ENCODE measurements at regions of chr7 and their contacts with region 1.

Region 1: DNA sequence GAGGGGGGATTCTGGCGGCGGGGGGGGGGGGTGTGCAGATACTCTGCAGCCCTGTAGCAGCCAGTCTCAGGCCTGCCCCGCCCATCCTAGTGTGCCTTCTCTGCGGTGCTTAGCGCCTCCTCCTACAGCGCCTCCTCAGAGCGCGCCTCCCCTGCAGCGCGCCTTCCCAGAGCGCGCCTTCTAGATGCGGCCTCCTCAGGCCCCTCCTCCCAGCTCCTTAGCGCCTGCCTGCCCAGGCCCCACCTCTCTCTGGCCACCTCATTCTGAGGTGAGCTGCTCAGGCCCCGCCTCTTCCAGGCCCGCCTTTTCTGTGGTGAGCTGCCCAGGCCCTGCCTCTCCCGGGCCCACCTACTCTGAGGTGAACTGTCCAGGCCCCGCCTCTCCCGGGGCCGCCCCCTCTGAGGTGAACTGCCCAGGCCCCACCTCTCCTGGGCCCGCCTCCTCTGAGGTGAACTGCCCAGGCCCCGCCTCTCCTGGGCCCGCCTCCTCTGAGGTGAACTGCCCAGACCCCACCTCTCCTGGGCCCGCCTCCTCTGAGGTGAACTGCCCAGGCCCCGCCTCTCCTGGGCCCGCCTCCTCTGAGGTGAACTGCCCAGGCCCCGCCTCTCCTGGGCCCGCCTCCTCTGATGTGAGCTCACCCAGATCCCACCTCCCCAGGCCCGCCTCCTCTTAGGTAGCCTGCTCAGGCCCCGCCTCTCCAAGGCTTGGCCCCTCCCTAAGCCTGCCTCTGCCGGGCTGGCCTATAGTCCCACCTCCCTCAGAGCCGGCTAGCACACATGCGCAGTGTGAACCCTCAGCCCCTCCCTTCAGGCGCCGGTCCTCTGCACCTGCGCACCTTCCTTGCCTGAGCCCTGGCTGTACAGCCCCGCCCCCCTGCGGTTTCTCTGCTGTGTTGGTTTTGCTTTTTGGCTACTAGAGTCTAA is 2.1 kb upstream of the SGCE start:
- DNase-seq: peak; percentile 94
- H3K4me3 Mint-ChIP-seq: peak overlapping the region; percentile 74
- H3K27ac Mint-ChIP-seq: no peak overlapping the region
- H3K4me1 Mint-ChIP-seq: no peaks in the 10 kb centered on the region
- H3K27me3 Mint-ChIP-seq: no peaks in the 10 kb centered on the region
- CTCF ChIP-seq: no peak

Region 2: DNA sequence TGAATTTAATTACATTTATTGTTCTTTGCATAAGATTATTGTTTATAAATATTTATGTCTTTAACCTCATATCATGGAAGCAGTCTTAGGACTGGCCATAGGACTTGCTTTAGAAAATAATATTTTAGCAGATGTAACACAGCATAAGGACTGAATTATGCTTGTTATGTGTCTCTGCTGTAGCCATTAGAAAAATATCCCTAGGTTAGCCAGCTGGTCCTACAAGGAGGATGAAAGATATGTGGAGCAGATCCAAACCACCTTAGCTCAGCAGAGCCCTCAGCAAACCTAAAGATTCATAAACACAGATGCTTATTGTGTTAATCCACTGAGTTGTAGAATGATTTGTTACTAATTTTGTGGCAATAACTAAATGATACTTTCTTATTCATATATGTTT is 429.4 kb before region 1 on chr7:
- CTCF ChIA-PET with region 1: no interaction called
- POLR2A ChIA-PET with region 1: no interaction called
- intact Hi-C with region 1: no loop called
- DNase-seq: no peak
- H3K4me3 Mint-ChIP-seq: no peak overlapping the region
- H3K27ac Mint-ChIP-seq: no peak overlapping the region
- H3K4me1 Mint-ChIP-seq: peaks cover 4% of the 10 kb centered on the region
- H3K27me3 Mint-ChIP-seq: no peaks in the 10 kb centered on the region
- CTCF ChIP-seq: no peak

Region 3: DNA sequence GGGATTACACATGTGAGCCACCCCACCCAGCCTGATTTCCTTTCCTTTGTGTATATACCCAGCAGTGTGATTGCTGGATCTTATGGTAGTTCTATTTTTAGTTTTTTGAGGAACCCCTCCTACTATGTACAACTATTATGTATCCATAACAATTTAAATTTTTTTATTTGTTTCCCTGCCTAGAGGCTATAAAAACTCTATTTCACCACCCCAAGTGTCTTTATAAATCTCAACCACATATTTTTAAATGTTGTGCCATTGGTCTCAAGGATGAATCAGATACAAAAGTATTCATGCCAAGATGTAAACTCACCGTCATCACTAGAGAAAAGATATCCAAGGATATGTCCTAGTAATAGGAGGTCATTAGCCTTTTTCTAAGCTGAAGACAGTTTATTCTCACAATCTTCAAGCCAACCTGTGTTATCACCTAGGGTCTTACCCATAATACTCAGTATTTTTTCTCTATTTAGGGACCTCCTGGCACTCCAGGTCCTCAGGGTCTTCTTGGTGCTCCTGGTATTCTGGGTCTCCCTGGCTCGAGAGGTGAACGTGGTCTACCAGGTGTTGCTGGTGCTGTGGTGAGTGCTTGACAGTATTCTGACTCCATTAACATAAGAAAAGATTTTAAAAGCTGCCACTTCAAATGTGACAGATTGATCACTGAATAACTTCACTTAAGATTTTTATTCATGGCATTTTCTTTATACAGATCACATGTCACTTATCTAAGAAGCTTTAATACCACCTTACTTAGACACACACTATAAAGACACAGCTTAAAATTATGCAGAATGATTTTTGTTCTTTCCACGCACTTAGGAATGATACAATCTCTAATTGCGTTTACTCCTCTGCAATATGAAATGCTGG is 233.9 kb before region 1 on chr7:
- CTCF ChIA-PET with region 1: no interaction called
- POLR2A ChIA-PET with region 1: no interaction called
- intact Hi-C with region 1: no loop called
- DNase-seq: peak; percentile 52
- H3K4me3 Mint-ChIP-seq: no peak overlapping the region
- H3K27ac Mint-ChIP-seq: peak overlapping the region; percentile 99
- H3K4me1 Mint-ChIP-seq: peaks cover 8% of the 10 kb centered on the region
- H3K27me3 Mint-ChIP-seq: no peaks in the 10 kb centered on the region
- CTCF ChIP-seq: no peak

Region 4: DNA sequence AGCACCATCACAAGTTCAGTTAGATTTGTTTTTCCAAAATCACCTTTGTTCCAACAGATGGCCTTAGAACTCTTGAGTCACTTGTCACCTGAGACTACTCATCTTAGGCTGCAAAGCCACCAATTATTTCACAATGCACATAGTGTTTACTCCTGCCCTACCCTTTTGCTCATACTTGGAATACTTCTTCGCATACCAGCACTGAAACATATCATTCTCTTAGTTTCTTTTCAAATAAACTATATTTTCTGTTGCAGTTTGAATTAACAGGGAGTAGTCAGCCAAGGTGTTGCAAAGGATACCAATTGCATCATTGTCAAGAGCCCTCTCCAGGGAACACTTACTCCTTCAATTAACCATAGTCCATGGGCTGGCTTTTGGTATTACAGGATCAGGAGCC is 77.4 kb before region 1 on chr7:
- CTCF ChIA-PET with region 1: interaction called, 7 read pairs
- POLR2A ChIA-PET with region 1: interaction called, 12 read pairs
- intact Hi-C with region 1: loop called (anchors 5 kb)
- DNase-seq: peak; percentile 27
- H3K4me3 Mint-ChIP-seq: no peak overlapping the region
- H3K27ac Mint-ChIP-seq: peak overlapping the region; percentile 21
- H3K4me1 Mint-ChIP-seq: peaks cover 46% of the 10 kb centered on the region
- H3K27me3 Mint-ChIP-seq: no peaks in the 10 kb centered on the region
- CTCF ChIP-seq: no peak

Region 5: DNA sequence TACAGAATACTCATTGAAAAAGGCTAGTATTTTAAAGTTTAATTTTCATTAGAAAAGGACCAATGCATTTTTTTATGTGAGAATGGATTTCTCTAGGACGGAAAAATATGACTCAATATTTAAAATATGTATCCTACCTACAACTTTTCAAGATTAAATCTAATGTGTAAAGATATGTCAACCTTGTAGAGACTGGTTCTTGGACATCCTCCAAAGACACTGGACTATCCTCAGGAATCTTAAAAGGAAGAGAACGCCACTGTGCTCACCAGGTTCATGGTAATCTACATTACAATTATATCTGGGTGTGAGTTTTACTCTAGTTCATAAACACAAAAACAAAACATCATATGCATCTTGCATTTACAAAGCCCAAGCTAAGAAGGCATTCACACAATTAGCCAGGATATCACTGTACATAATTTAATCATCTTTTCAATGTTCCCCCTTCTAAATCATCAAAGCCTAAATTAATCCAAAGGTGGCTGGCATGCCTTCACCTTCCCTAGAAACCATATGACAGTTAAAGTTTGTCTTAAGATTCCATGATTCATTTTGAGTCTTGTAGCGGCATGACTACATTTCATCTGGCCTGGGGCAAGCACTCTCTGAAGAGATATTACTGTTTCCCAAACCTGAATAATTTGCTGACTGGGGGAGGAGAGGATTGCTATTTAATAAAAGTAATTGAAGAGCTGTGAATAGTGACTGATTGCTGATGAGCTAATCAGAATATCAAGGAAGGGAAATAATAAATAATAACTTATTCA is 14.1 kb before region 1 on chr7:
- CTCF ChIA-PET with region 1: interaction called, 10 read pairs
- POLR2A ChIA-PET with region 1: interaction called, 35 read pairs
- intact Hi-C with region 1: no loop called
- DNase-seq: peak; percentile 68
- H3K4me3 Mint-ChIP-seq: no peak overlapping the region
- H3K27ac Mint-ChIP-seq: peak overlapping the region; percentile 11
- H3K4me1 Mint-ChIP-seq: peaks cover 25% of the 10 kb centered on the region
- H3K27me3 Mint-ChIP-seq: no peaks in the 10 kb centered on the region
- CTCF ChIP-seq: no peak

Region 6: DNA sequence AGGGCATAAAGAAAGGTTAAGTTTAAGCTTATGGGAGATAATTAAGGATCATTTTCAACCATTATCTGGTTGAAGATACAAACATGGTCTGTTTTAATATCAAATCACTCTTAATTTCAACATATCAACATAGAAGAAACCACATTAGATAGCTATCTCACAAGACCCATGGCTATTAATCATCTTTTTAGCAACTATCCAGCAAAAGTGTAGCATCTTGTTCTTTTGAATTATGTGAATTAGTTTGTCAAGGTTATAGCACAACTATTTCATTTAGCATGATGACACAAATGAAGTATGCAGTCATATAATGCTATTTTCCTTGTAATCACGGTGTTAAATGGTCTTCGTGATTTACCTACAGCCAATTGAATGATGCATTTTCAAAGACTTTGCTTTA is 190.5 kb after region 1 on chr7:
- CTCF ChIA-PET with region 1: no interaction called
- POLR2A ChIA-PET with region 1: no interaction called
- intact Hi-C with region 1: no loop called
- DNase-seq: peak; percentile 6
- H3K4me3 Mint-ChIP-seq: no peak overlapping the region
- H3K27ac Mint-ChIP-seq: no peak overlapping the region
- H3K4me1 Mint-ChIP-seq: no peaks in the 10 kb centered on the region
- H3K27me3 Mint-ChIP-seq: no peaks in the 10 kb centered on the region
- CTCF ChIP-seq: no peak

Region 7: DNA sequence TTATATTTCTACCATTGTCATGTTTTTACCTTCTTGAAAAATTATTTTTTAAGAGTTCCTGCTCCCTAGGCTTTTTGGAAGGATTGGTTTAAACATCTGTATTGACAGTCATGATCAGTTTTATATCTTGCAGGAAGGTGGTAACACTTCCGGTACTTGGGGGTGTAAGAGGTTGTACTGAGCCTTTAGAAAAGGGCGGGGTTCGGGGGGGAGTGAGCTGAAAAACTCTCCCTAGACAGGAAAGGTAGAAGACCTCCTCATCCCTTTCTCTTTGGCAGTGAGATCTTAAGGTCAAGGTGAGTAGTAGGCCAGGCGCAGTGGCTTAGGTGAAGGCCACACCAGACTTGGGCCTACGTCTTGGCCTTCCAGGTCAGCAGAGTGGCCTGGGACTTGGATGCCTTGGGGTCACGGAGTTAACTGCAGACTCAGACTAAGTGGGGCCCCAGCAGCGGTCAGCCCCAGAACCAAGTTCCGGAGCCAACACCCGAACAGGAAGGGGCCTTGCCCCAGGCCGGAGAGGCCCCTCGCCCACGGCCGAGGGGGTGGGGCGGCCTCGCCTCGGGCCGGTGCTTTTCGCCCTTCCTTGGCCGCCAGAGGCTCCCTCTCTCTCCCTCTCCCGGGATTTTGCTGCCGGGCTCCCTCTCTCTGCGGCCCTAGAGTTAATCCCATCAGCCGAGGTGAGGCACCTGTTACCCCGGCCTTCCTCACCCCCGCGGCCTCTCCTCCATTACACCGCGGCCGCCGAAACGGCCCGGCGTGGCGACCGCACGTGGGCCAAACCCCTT is 249.2 kb after region 1 on chr7 and contains the start of gene PPP1R9A:
- CTCF ChIA-PET with region 1: no interaction called
- POLR2A ChIA-PET with region 1: no interaction called
- intact Hi-C with region 1: loop called (anchors 2 kb)
- DNase-seq: peak; percentile 39
- H3K4me3 Mint-ChIP-seq: peak within 1 kb of the TSS; percentile 69
- H3K27ac Mint-ChIP-seq: no peak within 1 kb of the TSS
- H3K4me1 Mint-ChIP-seq: no peaks in the 10 kb centered on the region
- H3K27me3 Mint-ChIP-seq: peaks cover 31% of the 10 kb centered on the region
- CTCF ChIP-seq: peak; percentile 9
- total RNA-seq, gene PPP1R9A: 6.3 and 8.2 TPM in 2 replicates

Region 8: DNA sequence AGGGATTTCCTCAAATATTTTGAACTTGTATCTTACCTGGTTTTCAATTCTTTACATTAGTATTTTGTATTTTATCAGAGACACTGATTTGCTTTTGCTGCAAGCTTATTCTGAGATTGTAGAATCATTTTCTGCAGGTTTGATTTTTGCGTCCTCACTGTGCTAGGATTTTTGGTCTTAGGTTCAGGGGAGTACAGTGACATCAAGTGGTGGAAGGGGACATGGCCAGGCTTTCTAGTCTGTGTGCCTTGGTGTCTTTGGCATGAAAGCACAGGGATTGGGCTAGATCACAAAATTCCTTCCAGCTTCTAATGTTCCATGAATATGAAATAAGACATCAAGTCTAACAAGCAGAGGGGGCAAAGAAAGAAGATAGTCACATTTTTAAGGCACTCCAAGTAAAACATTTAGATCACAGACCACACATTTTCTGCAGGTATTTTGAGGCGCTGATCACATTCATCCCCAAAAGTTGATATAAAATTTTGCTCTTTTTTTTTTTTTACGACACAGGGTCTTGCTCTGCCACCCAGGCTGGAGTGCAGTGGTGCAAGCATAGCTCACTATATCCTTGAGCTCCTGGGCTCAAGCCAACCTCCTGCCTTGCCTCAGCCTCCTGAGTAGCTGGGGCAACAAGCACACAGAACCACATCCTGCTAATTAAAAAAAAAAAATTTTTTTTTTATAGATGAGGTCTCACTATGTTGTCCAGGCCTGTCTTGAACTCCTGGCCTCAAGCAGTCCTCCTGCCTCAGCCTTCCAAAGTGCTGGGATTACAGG is 541.9 kb after region 1 on chr7:
- CTCF ChIA-PET with region 1: interaction called, 6 read pairs
- POLR2A ChIA-PET with region 1: interaction called, 3 read pairs
- intact Hi-C with region 1: loop called (anchors 5 kb)
- DNase-seq: peak; percentile 68
- H3K4me3 Mint-ChIP-seq: no peak overlapping the region
- H3K27ac Mint-ChIP-seq: no peak overlapping the region
- H3K4me1 Mint-ChIP-seq: no peaks in the 10 kb centered on the region
- H3K27me3 Mint-ChIP-seq: peaks cover 17% of the 10 kb centered on the region
- CTCF ChIP-seq: peak; percentile 48

Region 9: DNA sequence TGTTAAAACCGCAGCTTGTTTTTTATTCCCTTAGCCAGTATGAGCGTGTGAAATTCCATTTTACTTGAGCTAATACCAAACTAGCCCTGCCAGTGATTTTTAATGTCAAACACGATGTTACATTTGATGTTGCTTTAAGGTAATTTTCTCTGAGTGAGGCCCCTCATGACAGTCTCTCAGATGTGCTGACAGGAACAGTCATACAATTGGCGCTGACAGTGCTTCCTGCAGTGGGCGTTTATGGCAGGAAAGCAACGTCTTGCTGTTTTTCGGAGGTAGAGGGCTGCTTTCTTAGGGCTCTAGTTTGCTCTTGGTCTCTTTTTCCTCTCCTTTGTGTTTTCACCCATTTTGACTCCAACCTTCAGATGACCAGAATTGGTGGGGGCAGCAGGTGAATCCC is 647.0 kb after region 1 on chr7:
- CTCF ChIA-PET with region 1: no interaction called
- POLR2A ChIA-PET with region 1: no interaction called
- intact Hi-C with region 1: no loop called
- DNase-seq: no peak
- H3K4me3 Mint-ChIP-seq: no peak overlapping the region
- H3K27ac Mint-ChIP-seq: no peak overlapping the region
- H3K4me1 Mint-ChIP-seq: no peaks in the 10 kb centered on the region
- H3K27me3 Mint-ChIP-seq: peaks cover 17% of the 10 kb centered on the region
- CTCF ChIP-seq: no peak